ENCODE measurements at regions of chr2 and their contacts with region 1.

Region 1: GRCh38 chr2:110865188-110865587 is 132.8 kb downstream of the ACOXL start:
- DNase-seq: peak; percentile 61
- H3K4me3 Mint-ChIP-seq: no peak overlapping the region
- H3K27ac Mint-ChIP-seq: no peak overlapping the region
- H3K4me1 Mint-ChIP-seq: peaks cover 32% of the 10 kb centered on the region
- H3K27me3 Mint-ChIP-seq: peaks cover 49% of the 10 kb centered on the region

Region 2: DNA sequence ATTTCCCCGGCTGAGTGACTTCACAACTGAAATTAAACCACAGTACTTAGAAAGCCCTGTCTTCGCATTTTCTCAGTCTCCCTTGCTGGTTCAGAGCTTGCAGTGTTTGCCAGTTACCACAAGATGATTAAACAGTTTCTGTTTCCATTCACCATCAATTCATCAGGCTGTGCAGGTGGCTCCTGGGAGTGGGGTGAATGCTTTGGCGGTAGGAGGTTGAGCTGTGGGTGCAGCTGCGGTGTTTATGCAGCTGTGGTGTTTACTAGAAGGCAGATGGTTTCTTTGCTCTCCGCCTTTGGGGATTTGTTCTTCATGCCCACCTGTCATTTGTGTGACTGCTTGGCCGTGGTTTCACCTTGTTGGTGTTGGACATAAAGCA is 116.7 kb before region 1 on chr2:
- CTCF ChIA-PET with region 1: no interaction called
- POLR2A ChIA-PET with region 1: no interaction called
- intact Hi-C with region 1: loop called (anchors 1 kb)
- DNase-seq: peak; percentile 89
- H3K4me3 Mint-ChIP-seq: peak overlapping the region; percentile 23
- H3K27ac Mint-ChIP-seq: peak overlapping the region; percentile 47
- H3K4me1 Mint-ChIP-seq: peaks cover 19% of the 10 kb centered on the region
- H3K27me3 Mint-ChIP-seq: peaks cover 62% of the 10 kb centered on the region

Region 3: GRCh38 chr2:110766291-110766690 is 98.9 kb before region 1 on chr2:
- CTCF ChIA-PET with region 1: no interaction called
- POLR2A ChIA-PET with region 1: no interaction called
- intact Hi-C with region 1: no loop called
- DNase-seq: no peak
- H3K4me3 Mint-ChIP-seq: no peak overlapping the region
- H3K27ac Mint-ChIP-seq: no peak overlapping the region
- H3K4me1 Mint-ChIP-seq: no peaks in the 10 kb centered on the region
- H3K27me3 Mint-ChIP-seq: peaks cover 39% of the 10 kb centered on the region

Region 4: DNA sequence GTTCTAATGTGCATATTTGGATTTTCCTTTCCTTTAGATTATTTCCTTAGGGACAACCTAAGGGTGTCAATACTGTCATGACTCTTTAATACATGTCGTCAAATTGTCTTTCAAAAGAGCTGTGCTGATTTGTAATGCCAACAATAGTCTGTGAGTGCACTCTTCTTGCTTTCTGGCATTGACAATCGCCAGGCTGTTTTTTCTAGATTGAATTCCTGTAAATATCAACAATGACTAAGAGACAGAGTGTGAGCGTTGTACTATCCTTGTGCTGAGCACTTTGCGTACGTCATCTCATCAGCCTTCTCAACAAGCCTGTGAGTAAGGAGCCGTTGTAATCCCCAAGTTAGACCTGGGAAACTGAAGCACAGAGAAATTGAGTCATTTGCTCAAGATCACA is 36.9 kb before region 1 on chr2:
- CTCF ChIA-PET with region 1: no interaction called
- POLR2A ChIA-PET with region 1: no interaction called
- intact Hi-C with region 1: no loop called
- DNase-seq: no peak
- H3K4me3 Mint-ChIP-seq: no peak overlapping the region
- H3K27ac Mint-ChIP-seq: no peak overlapping the region
- H3K4me1 Mint-ChIP-seq: peaks cover 14% of the 10 kb centered on the region
- H3K27me3 Mint-ChIP-seq: peaks cover 26% of the 10 kb centered on the region

Region 5: DNA sequence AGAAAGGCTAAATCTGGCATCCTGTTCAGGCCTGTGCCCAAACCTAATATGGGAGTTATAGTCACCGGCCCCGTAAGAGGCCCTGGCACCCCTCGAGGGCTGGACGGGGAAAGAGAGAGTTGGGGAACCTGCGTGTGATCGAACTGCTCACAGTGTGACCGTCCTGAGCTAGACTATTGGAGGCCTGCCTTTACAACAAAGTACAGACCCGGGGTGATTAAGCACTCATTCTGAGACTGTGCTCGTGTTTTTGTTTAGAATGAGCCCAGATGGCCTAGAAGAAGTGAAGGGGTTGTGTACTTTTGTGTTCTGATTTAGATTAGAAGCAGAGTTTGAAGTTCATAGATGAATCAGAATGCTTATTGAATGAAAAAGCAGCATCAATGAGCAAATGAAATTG is 17.5 kb before region 1 on chr2:
- CTCF ChIA-PET with region 1: no interaction called
- POLR2A ChIA-PET with region 1: interaction called, 7 read pairs
- intact Hi-C with region 1: loop called (anchors 1 kb)
- DNase-seq: peak; percentile 36
- H3K4me3 Mint-ChIP-seq: no peak overlapping the region
- H3K27ac Mint-ChIP-seq: peak overlapping the region; percentile 76
- H3K4me1 Mint-ChIP-seq: peaks cover 67% of the 10 kb centered on the region
- H3K27me3 Mint-ChIP-seq: peaks cover 22% of the 10 kb centered on the region

Region 6: DNA sequence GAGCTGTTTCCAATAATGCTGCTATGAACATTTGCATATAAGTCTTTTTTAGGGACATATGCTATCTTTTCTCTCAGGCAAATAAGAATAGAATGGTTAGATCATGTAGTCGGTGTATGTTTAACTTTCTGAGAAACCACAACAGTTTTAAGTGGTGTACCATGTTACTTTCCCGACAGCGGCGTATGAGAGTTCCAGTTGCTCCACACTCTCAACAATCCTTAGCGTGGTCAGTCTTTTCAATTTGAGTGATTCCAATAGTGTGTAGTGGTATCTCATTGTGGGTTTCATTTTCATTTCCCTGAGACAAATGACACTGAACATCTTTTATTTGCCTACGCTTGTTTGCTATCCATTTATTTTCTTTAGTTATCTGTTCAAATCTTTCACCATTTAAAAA is 16.7 kb after region 1 on chr2:
- CTCF ChIA-PET with region 1: interaction called, 6 read pairs
- POLR2A ChIA-PET with region 1: no interaction called
- intact Hi-C with region 1: loop called (anchors 2 kb)
- DNase-seq: peak; percentile 43
- H3K4me3 Mint-ChIP-seq: no peak overlapping the region
- H3K27ac Mint-ChIP-seq: no peak overlapping the region
- H3K4me1 Mint-ChIP-seq: peaks cover 9% of the 10 kb centered on the region
- H3K27me3 Mint-ChIP-seq: peaks cover 42% of the 10 kb centered on the region

Region 7: DNA sequence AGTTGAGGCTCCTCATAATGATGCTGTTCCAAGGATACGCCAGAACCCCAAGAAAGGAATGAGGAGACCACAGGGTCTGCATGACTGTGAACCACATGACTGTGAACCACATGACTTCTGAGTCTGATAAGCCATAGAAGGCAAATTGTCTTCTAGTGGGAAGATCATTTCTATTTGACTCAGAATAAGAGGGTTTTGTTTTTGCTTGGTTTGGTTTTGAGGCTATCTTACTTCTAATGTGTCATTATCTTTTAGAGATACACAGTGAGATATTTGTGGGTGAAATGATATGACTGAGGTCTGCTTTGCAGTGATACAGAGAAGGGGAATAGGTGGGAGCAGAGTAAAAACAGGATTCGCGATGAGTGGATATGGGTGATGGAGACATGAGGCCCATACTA is 226.6 kb after region 1 on chr2:
- CTCF ChIA-PET with region 1: interaction called, 5 read pairs
- POLR2A ChIA-PET with region 1: no interaction called
- intact Hi-C with region 1: loop called (anchors 2 kb)
- DNase-seq: peak; percentile 34
- H3K4me3 Mint-ChIP-seq: no peak overlapping the region
- H3K27ac Mint-ChIP-seq: no peak overlapping the region
- H3K4me1 Mint-ChIP-seq: peaks cover 18% of the 10 kb centered on the region
- H3K27me3 Mint-ChIP-seq: peaks cover 49% of the 10 kb centered on the region

Region 8: GRCh38 chr2:111120253-111121027 is 255.3 kb after region 1 on chr2 and contains the start of gene BCL2L11:
- CTCF ChIA-PET with region 1: no interaction called
- POLR2A ChIA-PET with region 1: interaction called, 3 read pairs
- intact Hi-C with region 1: loop called (anchors 2 kb)
- DNase-seq: peak; percentile 94
- H3K4me3 Mint-ChIP-seq: peak within 1 kb of the TSS; percentile 90
- H3K27ac Mint-ChIP-seq: peak within 1 kb of the TSS; percentile 88
- H3K4me1 Mint-ChIP-seq: peaks cover 60% of the 10 kb centered on the region
- H3K27me3 Mint-ChIP-seq: peaks cover 13% of the 10 kb centered on the region
- total RNA-seq, gene BCL2L11: 21.9 to 25.6 TPM